Mammary epithelial cell (primary cell): ENCODE measurements at regions of chr10 and their contacts with region 1.

Region 1: DNA sequence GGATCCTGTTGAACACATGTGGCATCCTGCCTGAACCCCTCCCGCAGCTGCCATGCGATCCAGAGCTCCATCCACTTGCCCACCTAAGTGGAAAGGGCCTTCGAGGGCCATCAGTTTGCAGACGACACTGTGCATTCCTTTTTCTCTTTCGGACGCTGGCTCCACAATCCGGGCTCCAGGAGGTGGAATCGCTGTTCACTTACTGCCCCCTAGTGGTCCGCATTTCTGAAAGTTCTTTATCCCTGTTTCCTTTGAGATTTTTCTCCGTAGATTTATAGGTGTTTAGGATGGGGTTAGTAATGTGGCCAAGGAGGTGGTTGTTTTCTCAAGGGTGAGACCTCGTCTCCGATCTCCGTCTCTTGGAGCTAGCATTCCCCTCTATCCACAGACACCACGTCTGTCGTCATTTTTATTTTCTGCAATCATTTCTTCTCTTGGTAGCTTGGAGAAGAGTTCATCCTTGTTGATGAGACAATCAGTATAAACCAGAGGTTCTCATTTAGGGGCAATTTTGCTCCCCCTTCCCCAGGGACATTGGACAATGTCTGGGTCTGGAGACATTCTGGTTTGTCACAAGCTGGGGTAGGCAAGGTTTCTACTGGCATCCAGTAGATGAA is 204.6 kb downstream of the ARHGAP21 start:
- DNase-seq: peak; percentile 36
- H3K4me3 ChIP-seq: no peak overlapping the region
- H3K27ac ChIP-seq: no peak overlapping the region
- H3K4me1 ChIP-seq: peaks cover 3% of the 10 kb centered on the region
- H3K27me3 ChIP-seq: no peaks in the 10 kb centered on the region
- CTCF ChIP-seq: peak; percentile 79 to 80

Region 2: GRCh38 chr10:24374134-24374915 is 144.8 kb before region 1 on chr10:
- CTCF ChIA-PET with region 1: no interaction called
- dilution Hi-C with region 1: no loop called
- in situ Hi-C with region 1: loop called in 1 of 2 experiments (anchors 10 kb)
- intact Hi-C with region 1: no loop called
- DNase-seq: peak; percentile 23
- H3K4me3 ChIP-seq: no peak overlapping the region
- H3K27ac ChIP-seq: no peak overlapping the region
- H3K4me1 ChIP-seq: peaks cover 4% of the 10 kb centered on the region
- H3K27me3 ChIP-seq: no peaks in the 10 kb centered on the region
- CTCF ChIP-seq: no peak

Region 3: DNA sequence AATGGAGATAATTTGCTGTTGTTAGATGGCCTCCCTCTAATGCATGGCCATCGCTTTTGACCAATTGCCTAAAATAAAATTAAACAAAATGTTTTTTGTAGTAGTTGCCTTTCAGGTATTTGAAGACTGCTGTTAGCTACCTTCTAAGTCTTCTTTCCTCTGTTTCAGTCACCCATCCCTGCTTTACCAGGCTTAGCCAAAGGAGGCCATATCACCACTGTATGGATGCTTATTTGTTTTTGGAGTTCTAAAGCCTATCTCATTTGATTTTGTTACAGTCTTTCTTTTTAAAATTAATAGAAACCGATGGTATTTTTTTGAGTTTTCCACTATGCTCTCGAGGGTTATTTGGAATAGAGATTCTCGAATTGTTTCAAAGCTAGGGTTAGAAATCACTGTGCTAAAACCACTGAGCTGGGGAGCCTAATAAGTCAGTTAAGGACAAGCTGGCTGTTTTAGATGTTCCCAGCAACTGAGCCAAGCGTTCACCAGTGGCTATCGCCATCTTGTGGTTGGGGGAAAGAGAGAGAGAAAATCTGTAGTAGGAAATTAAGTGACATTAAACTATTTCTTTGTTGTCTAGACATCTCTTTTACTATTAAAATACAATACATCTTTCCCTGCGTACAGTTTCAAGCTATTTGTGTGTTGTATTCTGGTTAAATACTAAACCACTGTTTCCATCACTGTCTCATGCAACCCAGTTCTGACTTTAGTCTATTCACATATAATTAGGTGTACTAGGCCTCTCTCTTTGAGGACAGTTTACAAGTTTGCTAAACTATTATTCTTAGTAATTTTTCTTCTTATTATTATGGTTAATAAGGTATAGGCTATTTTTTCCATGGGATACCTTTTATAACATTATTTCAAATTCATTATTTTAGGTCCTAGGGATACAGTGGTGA is 707.9 kb after region 1 on chr10:
- CTCF ChIA-PET with region 1: no interaction called
- dilution Hi-C with region 1: no loop called
- in situ Hi-C with region 1: no loop called
- intact Hi-C with region 1: no loop called
- DNase-seq: peak; percentile 43
- H3K4me3 ChIP-seq: no peak overlapping the region
- H3K27ac ChIP-seq: no peak overlapping the region
- H3K4me1 ChIP-seq: no peaks in the 10 kb centered on the region
- H3K27me3 ChIP-seq: peaks cover 3% of the 10 kb centered on the region
- CTCF ChIP-seq: peak; percentile 77 to 78

Region 4: GRCh38 chr10:25382029-25382810 is 863.1 kb after region 1 on chr10:
- CTCF ChIA-PET with region 1: no interaction called
- dilution Hi-C with region 1: no loop called
- in situ Hi-C with region 1: no loop called
- intact Hi-C with region 1: no loop called
- DNase-seq: no peak
- H3K4me3 ChIP-seq: no peak overlapping the region
- H3K27ac ChIP-seq: no peak overlapping the region
- H3K4me1 ChIP-seq: no peaks in the 10 kb centered on the region
- H3K27me3 ChIP-seq: no peaks in the 10 kb centered on the region
- CTCF ChIP-seq: no peak